CD14-positive monocyte (primary cell): ENCODE measurements at regions of chr1 and their contacts with region 1.

Region 1: DNA sequence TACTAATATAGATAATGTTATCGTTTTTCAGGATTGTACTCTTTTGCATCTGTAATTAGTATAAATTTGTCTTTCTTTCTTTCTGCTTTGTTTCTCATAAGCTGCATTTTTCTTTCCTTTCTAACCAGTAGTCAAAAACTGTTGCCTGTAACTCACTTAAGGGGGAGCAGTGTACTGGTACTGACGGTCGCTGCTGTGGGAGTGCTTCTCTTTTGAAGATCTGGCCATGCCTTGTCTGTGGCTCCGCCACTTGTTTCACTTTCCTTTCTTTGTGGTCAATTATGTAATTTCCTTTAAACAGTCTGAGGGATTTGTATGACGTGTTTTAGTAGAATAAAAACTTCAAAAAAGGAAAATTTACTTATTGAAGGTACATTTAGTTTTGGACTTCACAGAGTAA is 37.0 kb downstream of the MIA3 start:
- DNase-seq: peak; percentile 67 to 82 (median 80)
- H3K4me3 ChIP-seq: peak overlapping the region; percentile 2 to 65 (median 40)
- H3K4me3 Mint-ChIP-seq: peak overlapping the region; percentile 63 to 87
- H3K27ac ChIP-seq: peak overlapping the region; percentile 28 to 80
- H3K27ac Mint-ChIP-seq: peak overlapping the region; percentile 89 to 95 (median 90)
- H3K4me1 ChIP-seq: peaks cover 14 to 16% of the 10 kb centered on the region in 2 donors
- H3K4me1 Mint-ChIP-seq: peaks cover 14% of the 10 kb centered on the region
- H3K27me3 ChIP-seq: no peaks in the 10 kb centered on the region
- H3K27me3 Mint-ChIP-seq: no peaks in the 10 kb centered on the region
- CTCF ChIP-seq: no peak

Region 2: GRCh38 chr1:222713091-222713961 is 58.5 kb after region 1 on chr1:
- intact Hi-C with region 1: loop called in 1 of 2 experiments (anchors 5 kb)
- DNase-seq: peak; percentile 90 to 91 (median 90)
- H3K4me3 ChIP-seq: peak overlapping the region; percentile 97 to 99 (median 98)
- H3K4me3 Mint-ChIP-seq: peak overlapping the region; percentile 93 to 97
- H3K27ac ChIP-seq: peak overlapping the region; percentile 98 to 100
- H3K27ac Mint-ChIP-seq: peak overlapping the region; percentile 99 to 100 (median 100)
- H3K4me1 ChIP-seq: peaks cover 16 to 33% of the 10 kb centered on the region in 2 donors
- H3K4me1 Mint-ChIP-seq: peaks cover 40% of the 10 kb centered on the region
- H3K27me3 ChIP-seq: no peaks in the 10 kb centered on the region
- H3K27me3 Mint-ChIP-seq: no peaks in the 10 kb centered on the region
- CTCF ChIP-seq: no peak